ENCODE measurements at regions of chr15 and their contacts with region 1.

Region 1: DNA sequence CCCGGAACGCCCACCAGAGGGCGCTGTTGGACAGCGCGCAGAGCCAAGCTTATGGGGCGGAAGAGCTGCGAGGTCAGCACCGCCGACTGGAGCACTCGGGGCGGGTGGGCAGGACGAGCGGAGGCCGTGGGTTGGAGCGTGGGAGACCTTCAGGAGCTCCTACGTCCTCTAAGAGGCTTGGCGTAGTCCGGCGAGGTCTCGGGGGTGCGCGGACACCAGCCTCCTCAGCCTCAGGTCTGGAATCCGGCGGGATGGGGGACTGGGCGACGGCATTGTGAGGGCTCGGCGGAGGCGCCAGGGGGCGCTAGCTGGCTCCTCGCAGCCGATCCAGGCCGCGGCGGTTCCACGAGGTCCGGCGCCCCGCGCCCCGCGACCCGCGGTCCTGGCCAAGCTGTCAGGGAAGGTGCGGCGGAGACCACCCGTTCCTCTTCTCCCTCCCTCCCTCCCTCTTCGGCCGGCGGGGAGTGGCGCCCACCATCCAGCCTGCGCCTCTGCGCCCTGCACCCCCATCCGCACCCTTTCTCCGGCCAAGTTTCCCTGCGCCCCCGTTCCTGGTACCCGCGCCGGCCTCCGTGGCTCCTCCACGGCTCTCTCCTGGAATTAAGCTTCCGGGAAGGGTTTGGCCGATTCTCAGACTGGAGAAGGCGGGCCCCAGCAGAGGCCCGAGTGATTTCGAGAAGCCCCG is 24.3 kb upstream of the POLG start:
- DNase-seq: peak; percentile 34
- H3K4me3 ChIP-seq: peak overlapping the region; percentile 64
- H3K27ac ChIP-seq: no peak overlapping the region
- H3K27me3 ChIP-seq: peaks cover 73% of the 10 kb centered on the region
- CTCF ChIP-seq: peak; percentile 80

Region 2: GRCh38 chr15:89329329-89330084 is 29.4 kb before region 1 on chr15:
- CTCF ChIA-PET with region 1: interaction called, 72 read pairs
- POLR2A ChIA-PET with region 1: interaction called, 10 read pairs
- DNase-seq: no peak
- H3K4me3 ChIP-seq: no peak overlapping the region
- H3K27ac ChIP-seq: no peak overlapping the region
- H3K27me3 ChIP-seq: no peaks in the 10 kb centered on the region
- CTCF ChIP-seq: no peak

Region 3: DNA sequence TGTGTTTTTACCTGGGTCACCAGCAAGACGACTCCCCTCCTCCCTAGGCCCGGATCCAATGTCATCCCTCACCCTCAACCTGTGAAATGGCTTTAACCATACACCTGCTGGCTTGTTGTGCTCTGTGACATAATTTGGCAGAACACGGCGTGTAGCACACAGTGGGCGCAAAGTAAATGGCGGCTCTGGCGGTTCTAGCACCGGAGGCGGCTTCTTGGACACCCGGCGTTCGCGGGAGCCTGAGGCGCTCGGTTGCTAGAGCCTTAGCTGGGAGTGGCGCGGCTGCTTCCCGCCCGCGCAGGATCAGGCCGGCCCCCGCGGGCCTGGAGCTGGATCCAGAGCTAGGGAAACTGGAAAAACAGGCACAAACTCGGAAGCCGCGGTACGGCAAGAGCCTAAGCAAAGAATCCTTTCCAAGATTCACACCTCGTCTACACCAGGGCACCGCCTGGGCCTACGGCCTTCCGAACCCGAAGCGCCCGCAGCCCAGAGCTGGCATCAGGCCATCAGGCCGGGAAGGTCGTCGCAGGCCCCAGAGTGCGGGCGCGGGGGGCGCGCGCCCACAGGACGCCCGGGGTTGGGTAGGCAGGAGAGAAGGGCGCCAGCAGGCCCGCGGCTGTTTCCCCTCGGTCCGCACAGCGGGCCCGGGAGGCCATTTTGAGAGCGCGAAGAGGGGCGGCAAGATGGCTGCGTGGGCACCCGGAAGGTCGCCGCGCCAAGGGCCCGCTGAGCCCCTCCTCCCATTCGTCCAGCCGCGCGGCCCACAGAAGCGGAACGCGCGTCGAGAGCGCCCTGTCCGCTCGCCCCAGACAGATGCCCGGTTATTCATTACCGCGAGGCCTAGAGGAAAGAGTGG is 19.6 kb after region 1 on chr15:
- CTCF ChIA-PET with region 1: interaction called, 45 read pairs
- POLR2A ChIA-PET with region 1: no interaction called
- DNase-seq: no peak
- H3K4me3 ChIP-seq: no peak overlapping the region
- H3K27ac ChIP-seq: no peak overlapping the region
- H3K27me3 ChIP-seq: peaks cover 89% of the 10 kb centered on the region
- CTCF ChIP-seq: no peak

Region 4: DNA sequence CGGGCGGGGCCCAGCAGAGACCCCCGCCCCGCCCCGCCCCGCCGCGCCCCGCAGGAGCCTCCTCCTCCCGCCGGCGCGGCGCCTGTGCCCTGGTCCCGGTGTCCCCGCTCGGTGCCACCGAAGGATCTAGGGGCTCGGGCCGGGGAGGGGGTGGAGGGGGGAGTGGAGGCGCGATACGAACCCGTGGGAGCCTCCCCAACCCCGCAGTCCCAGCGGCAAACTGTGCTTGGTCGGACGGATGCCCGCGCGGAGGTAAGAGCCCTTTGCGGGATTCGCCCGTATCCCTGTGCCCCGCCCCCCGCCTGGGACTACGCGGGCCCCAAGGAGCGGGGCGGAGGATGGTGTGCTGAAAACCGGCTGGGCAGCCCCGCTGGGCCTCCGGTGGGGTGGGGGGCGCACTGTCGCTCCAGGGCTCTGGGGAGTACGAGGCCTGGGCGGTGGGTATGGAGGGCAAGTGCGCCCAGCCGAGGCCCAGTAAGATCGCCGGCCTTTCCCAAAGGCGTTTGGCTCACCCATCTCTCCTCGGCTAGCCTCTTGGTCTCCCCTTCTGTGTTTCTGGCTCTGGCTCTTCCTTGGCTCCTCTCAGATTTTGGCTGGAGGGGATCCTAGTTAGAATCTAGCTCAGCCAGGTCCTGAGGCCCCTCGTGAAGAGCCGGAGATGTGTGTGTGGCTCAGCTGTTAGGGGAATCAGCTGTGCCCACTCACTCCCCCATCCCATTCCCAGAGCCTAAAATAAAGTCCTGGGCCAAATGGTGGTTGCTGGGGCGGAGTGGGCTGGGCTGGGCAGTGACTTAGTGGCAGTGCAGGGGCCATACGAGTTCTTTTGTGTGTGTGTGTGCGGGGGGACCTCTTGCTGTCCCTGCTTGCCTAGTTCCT is 41.5 kb after region 1 on chr15:
- CTCF ChIA-PET with region 1: interaction called, 40 read pairs
- POLR2A ChIA-PET with region 1: no interaction called
- DNase-seq: no peak
- H3K4me3 ChIP-seq: no peak overlapping the region
- H3K27ac ChIP-seq: no peak overlapping the region
- H3K27me3 ChIP-seq: peaks cover 71% of the 10 kb centered on the region
- CTCF ChIP-seq: no peak

Region 5: GRCh38 chr15:89442671-89443307 is 83.9 kb after region 1 on chr15:
- CTCF ChIA-PET with region 1: interaction called, 21 read pairs
- POLR2A ChIA-PET with region 1: no interaction called
- DNase-seq: no peak
- H3K4me3 ChIP-seq: no peak overlapping the region
- H3K27ac ChIP-seq: no peak overlapping the region
- H3K27me3 ChIP-seq: peaks cover 43% of the 10 kb centered on the region
- CTCF ChIP-seq: peak; percentile 61

Region 6: GRCh38 chr15:89551502-89551901 is 192.6 kb after region 1 on chr15:
- CTCF ChIA-PET with region 1: interaction called, 17 read pairs
- POLR2A ChIA-PET with region 1: no interaction called
- DNase-seq: no peak
- H3K4me3 ChIP-seq: no peak overlapping the region
- H3K27ac ChIP-seq: no peak overlapping the region
- H3K27me3 ChIP-seq: peaks cover 13% of the 10 kb centered on the region
- CTCF ChIP-seq: no peak